WTC11 (cell line): ENCODE measurements at regions of chr2 and their contacts with region 1.

Region 1: GRCh38 chr2:119476301-119477021 is 44.8 kb downstream of the TMEM37 start:
- DNase-seq: peak; percentile 82
- ATAC-seq: peak; percentile 92
- H3K4me3 Mint-ChIP-seq: peak overlapping the region; percentile 25
- H3K27ac Mint-ChIP-seq: no peak overlapping the region
- H3K4me1 Mint-ChIP-seq: peaks cover 11% of the 10 kb centered on the region
- H3K27me3 Mint-ChIP-seq: no peaks in the 10 kb centered on the region
- CTCF ChIP-seq: peak; percentile 99

Region 2: DNA sequence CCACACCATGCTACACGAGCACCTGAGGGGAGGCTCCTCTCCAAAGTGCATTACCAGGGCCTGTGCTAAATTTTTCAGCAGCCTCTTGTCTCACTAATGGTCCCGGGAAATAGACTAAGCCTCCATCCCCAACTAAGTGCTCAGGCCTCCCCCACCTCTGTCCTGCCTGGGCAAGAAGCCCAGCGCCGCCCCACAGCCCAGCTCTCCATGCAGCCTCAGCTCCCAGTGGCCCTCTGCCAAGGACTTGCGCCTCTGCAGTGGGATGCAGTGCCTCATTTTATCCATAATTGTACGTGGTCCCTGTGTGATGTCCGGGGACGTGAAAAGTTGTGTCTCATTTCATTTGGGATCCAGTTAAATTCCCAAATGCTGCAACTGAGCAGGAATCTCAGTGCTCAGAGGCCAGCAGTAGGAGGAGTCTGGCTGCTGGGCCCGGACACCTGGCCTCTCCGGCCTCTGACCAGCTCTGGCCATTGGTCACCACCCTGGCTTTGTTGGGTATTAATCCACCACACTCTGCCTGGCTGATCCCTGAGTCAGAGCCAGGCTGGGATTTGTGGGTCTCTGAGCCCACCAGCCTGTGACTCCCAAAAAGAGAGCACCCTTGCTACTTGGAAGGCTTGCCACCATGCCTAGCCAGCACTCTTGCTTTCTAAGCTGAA is 264.2 kb before region 1 on chr2:
- CTCF ChIA-PET with region 1: no interaction called
- POLR2A ChIA-PET with region 1: no interaction called
- DNase-seq: no peak
- ATAC-seq: no peak
- H3K4me3 Mint-ChIP-seq: no peak overlapping the region
- H3K27ac Mint-ChIP-seq: no peak overlapping the region
- H3K4me1 Mint-ChIP-seq: peaks cover 17% of the 10 kb centered on the region
- H3K27me3 Mint-ChIP-seq: no peaks in the 10 kb centered on the region; the same call in 1 of the 2 replicates
- CTCF ChIP-seq: no peak

Region 3: GRCh38 chr2:119311356-119311755 is 165.1 kb before region 1 on chr2:
- CTCF ChIA-PET with region 1: interaction called, 11 read pairs
- POLR2A ChIA-PET with region 1: no interaction called
- DNase-seq: peak; percentile 44
- ATAC-seq: peak; percentile 88
- H3K4me3 Mint-ChIP-seq: no peak overlapping the region
- H3K27ac Mint-ChIP-seq: no peak overlapping the region
- H3K4me1 Mint-ChIP-seq: peaks cover 23% of the 10 kb centered on the region
- H3K27me3 Mint-ChIP-seq: no peaks in the 10 kb centered on the region
- CTCF ChIP-seq: no peak

Region 4: GRCh38 chr2:119366649-119367471 is 109.6 kb before region 1 on chr2 and contains the starts of genes C2orf76 and DBI:
- CTCF ChIA-PET with region 1: interaction called, 26 read pairs
- POLR2A ChIA-PET with region 1: no interaction called
- DNase-seq: peak; percentile 94
- ATAC-seq: peak; percentile 93
- H3K4me3 Mint-ChIP-seq: peak within 1 kb of the TSS; percentile 99
- H3K27ac Mint-ChIP-seq: peak within 1 kb of the TSS; percentile 93
- H3K4me1 Mint-ChIP-seq: peaks cover 23% of the 10 kb centered on the region
- H3K27me3 Mint-ChIP-seq: no peaks in the 10 kb centered on the region
- CTCF ChIP-seq: no peak
- total RNA-seq, gene C2orf76: 4.4 to 5.2 TPM (median 4.6 TPM) in 3 replicates
- total RNA-seq, gene DBI: 146 to 158 TPM (median 150 TPM) in 3 replicates

Region 5: GRCh38 chr2:119416299-119416923 is 60.0 kb before region 1 on chr2:
- CTCF ChIA-PET with region 1: interaction called, 145 read pairs
- POLR2A ChIA-PET with region 1: no interaction called
- DNase-seq: no peak
- ATAC-seq: no peak
- H3K4me3 Mint-ChIP-seq: no peak overlapping the region
- H3K27ac Mint-ChIP-seq: no peak overlapping the region
- H3K4me1 Mint-ChIP-seq: peaks cover 7% of the 10 kb centered on the region
- H3K27me3 Mint-ChIP-seq: peaks cover 3% of the 10 kb centered on the region
- CTCF ChIP-seq: no peak

Region 6: DNA sequence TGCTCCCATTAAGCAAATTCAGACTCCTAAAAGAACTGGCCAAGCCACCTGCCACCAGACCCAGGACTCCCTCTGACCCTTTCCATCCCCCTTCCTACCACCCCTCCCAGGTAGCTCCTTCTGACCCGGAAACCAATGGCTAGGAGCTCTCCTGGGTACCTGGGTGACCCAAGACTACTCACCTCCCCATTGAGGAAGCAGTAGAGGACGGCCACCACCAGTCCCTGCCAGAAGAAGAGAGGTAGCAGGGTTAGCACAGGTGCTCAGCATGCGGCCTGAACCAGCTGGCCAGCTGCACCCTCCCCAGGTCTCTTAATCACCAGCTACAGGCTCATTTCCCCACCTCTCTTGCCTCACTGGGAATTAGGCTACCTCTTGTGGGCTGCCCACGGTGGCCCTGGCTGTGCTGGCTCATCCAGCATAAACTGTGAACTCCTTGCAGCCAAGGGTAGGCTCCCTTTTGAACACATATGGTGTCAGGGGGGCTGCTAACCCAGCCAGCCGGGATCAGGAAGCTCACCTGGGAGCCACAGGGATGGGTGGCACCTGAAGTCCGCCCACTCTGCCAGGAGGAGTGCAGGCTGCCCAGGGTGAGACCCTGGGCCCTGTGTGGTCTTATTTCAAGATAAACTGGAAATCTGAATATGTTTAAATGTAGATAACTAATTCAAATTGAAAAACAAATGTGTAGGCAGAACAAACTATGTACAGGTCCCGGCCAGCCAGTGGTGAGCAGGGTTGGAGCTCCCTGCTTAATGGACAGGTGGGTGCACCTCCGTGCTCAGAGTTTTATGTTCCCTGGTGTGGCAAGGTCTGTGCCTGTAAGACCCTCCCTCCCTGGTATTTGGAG is 34.9 kb before region 1 on chr2:
- CTCF ChIA-PET with region 1: interaction called, 16 read pairs
- POLR2A ChIA-PET with region 1: no interaction called
- DNase-seq: no peak
- ATAC-seq: peak; percentile 34; the same call in 1 of the 2 replicates
- H3K4me3 Mint-ChIP-seq: no peak overlapping the region
- H3K27ac Mint-ChIP-seq: no peak overlapping the region
- H3K4me1 Mint-ChIP-seq: peaks cover 12% of the 10 kb centered on the region
- H3K27me3 Mint-ChIP-seq: no peaks in the 10 kb centered on the region
- CTCF ChIP-seq: no peak

Region 7: DNA sequence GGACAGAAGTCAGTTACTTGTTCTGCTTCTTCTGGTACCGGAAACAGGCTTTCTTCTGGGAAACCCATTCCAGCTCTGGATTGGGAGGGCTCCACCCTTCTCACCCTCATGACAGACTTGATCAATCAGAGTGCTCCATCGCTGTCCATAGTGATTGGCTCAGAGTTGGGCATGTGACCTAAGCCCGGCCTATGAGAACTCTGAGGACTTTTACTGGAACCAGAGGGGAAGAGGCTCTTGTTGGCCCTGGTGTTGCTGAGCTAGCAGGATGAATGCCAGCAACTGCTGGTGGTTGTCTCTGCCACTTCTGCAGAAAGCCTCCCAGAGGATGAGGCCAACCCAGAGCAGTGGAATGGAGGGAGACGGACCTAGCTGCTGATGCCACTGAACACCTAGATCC is 11.5 kb before region 1 on chr2:
- CTCF ChIA-PET with region 1: interaction called, 23 read pairs
- POLR2A ChIA-PET with region 1: no interaction called
- DNase-seq: no peak
- ATAC-seq: peak; percentile 77
- H3K4me3 Mint-ChIP-seq: no peak overlapping the region
- H3K27ac Mint-ChIP-seq: no peak overlapping the region
- H3K4me1 Mint-ChIP-seq: peaks cover 8% of the 10 kb centered on the region
- H3K27me3 Mint-ChIP-seq: no peaks in the 10 kb centered on the region
- CTCF ChIP-seq: no peak

Region 8: GRCh38 chr2:119523952-119524694 is 47.7 kb after region 1 on chr2 and contains the start of gene SCTR:
- CTCF ChIA-PET with region 1: interaction called, 13 read pairs
- POLR2A ChIA-PET with region 1: no interaction called
- DNase-seq: peak; percentile 59
- ATAC-seq: peak; percentile 80
- H3K4me3 Mint-ChIP-seq: peak within 1 kb of the TSS; percentile 74
- H3K27ac Mint-ChIP-seq: no peak within 1 kb of the TSS
- H3K4me1 Mint-ChIP-seq: peaks cover 25% of the 10 kb centered on the region
- H3K27me3 Mint-ChIP-seq: peaks cover 60% of the 10 kb centered on the region
- CTCF ChIP-seq: no peak
- total RNA-seq, gene SCTR: 0.09 to 0.18 TPM in 2 of 3 replicates, not detected in the other